ENCODE measurements at regions of chr12 and their contacts with region 1.

Region 1: DNA sequence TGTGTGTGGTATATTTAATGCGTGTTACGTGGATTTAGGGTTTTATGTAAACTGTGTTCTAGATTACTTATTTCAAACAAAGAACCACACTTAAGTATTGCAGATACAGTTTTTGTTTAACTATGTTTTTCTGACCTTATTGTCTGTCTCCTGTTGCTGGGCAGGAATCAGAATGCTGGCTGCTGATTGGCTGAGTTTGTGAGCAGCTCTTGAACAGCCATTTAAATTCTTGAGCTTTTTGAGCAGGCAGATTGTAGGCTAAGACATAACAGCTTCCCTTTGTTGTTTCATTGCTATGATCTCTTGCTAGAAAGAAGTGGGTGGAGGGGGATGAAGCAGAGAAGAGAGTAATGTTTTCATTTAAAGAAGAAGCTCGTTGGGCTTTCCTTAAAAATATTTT is 52.2 kb downstream of the ATF7IP start:
- DNase-seq: peak; percentile 51 to 85 (median 69)
- H3K4me3 ChIP-seq: no peak overlapping the region
- H3K4me3 Mint-ChIP-seq: peak overlapping the region; percentile 50 to 88 (median 85)
- H3K27ac ChIP-seq: no peak overlapping the region
- H3K27ac Mint-ChIP-seq: peak overlapping the region; percentile 23 to 97 (median 89)
- H3K4me1 ChIP-seq: peaks cover 63% of the 10 kb centered on the region
- H3K4me1 Mint-ChIP-seq: peaks cover 65 to 88% (median 84%) of the 10 kb centered on the region in 3 donors
- H3K27me3 ChIP-seq: no peaks in the 10 kb centered on the region
- H3K27me3 Mint-ChIP-seq: no peaks in the 10 kb centered on the region

Region 2: GRCh38 chr12:14403711-14404196 is 14.0 kb before region 1 on chr12:
- CTCF ChIA-PET with region 1: interaction called, 14 read pairs
- POLR2A ChIA-PET with region 1: interaction called, 6 read pairs
- DNase-seq: peak in 3 of 5 donors; percentile 60 to 69 (median 61)
- H3K4me3 ChIP-seq: no peak overlapping the region
- H3K4me3 Mint-ChIP-seq: peak overlapping the region; percentile 70 to 86 (median 78)
- H3K27ac ChIP-seq: peak overlapping the region; percentile 13
- H3K27ac Mint-ChIP-seq: peak overlapping the region; percentile 87 to 98 (median 94)
- H3K4me1 ChIP-seq: peaks cover 94% of the 10 kb centered on the region
- H3K4me1 Mint-ChIP-seq: peaks cover 75 to 91% (median 86%) of the 10 kb centered on the region in 3 donors
- H3K27me3 ChIP-seq: no peaks in the 10 kb centered on the region
- H3K27me3 Mint-ChIP-seq: no peaks in the 10 kb centered on the region

Region 3: GRCh38 chr12:14443531-14443930 is 25.8 kb after region 1 on chr12:
- CTCF ChIA-PET with region 1: no interaction called
- POLR2A ChIA-PET with region 1: no interaction called
- DNase-seq: no peak
- H3K4me3 ChIP-seq: no peak overlapping the region
- H3K4me3 Mint-ChIP-seq: no peak overlapping the region
- H3K27ac ChIP-seq: no peak overlapping the region
- H3K27ac Mint-ChIP-seq: peak overlapping the region in 5 of 8 donors; percentile 1 to 79 (median 52)
- H3K4me1 ChIP-seq: no peaks in the 10 kb centered on the region
- H3K4me1 Mint-ChIP-seq: peaks cover 43 to 61% (median 50%) of the 10 kb centered on the region in 3 donors
- H3K27me3 ChIP-seq: no peaks in the 10 kb centered on the region
- H3K27me3 Mint-ChIP-seq: no peaks in the 10 kb centered on the region

Measured in CD8-positive, alpha-beta memory T cell (primary cell).